ENCODE measurements at regions of chr2 and their contacts with region 1.

Region 1: DNA sequence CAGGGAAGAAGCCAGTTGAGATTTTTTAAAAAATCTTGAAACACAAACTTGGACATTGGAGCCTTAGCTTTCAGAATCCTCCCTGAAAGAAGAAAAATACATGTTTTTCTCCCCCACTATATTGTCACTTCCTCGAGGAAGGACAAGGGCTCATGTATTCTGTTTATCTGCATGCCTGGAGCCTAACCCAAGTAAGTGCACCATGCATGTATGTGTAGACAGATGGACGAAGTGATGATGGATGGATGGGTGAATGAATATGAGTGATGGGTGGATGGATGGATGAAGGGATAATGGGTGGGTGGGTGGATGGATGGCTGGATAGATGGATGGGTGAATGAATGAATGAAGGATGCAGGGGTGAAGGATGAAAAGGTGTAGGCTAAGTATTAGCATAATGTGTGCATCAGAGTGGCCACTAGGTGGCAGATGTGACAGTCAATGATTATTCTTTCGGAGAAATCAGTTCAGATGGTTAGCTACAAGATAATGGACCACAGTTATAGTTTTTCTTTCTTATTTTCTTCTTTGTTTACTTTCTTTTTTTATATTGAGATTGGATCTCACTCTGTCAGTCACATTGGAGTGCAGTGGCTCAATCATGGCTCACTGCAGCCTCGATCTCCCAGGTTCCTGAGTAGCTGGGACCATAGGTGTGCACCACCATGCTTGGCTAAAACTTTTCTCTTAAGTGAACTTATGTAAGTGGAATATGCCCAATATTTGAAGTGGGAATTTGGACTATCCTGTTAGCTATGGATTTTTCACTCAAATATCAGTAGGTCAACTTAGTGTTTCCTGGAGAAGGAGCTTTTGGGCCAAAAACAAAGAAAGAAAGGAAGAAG is 18.5 kb upstream of the CCDC93 start:
- DNase-seq: peak in 5 of 9 donors; percentile 22 to 36 (median 30)
- ATAC-seq: peak; percentile 86
- H3K4me3 ChIP-seq: no peak overlapping the region
- H3K4me3 Mint-ChIP-seq: no peak overlapping the region
- H3K27ac ChIP-seq: no peak overlapping the region
- H3K27ac Mint-ChIP-seq: no peak overlapping the region
- H3K4me1 ChIP-seq: no peaks in the 10 kb centered on the region
- H3K4me1 Mint-ChIP-seq: no peaks in the 10 kb centered on the region
- H3K27me3 ChIP-seq: no peaks in the 10 kb centered on the region
- H3K27me3 Mint-ChIP-seq: peaks cover 48 to 60% (median 51%) of the 10 kb centered on the region in 5 donors

Region 2: GRCh38 chr2:117875786-117876185 is 156.6 kb before region 1 on chr2:
- CTCF ChIA-PET with region 1: no interaction called
- POLR2A ChIA-PET with region 1: no interaction called
- intact Hi-C with region 1: no loop called
- DNase-seq: no peak
- ATAC-seq: no peak
- H3K4me3 ChIP-seq: no peak overlapping the region
- H3K4me3 Mint-ChIP-seq: no peak overlapping the region
- H3K27ac ChIP-seq: no peak overlapping the region
- H3K27ac Mint-ChIP-seq: no peak overlapping the region
- H3K4me1 ChIP-seq: no peaks in the 10 kb centered on the region
- H3K4me1 Mint-ChIP-seq: no peaks in the 10 kb centered on the region
- H3K27me3 ChIP-seq: no peaks in the 10 kb centered on the region
- H3K27me3 Mint-ChIP-seq: peaks cover 0 to 63% (median 47%) of the 10 kb centered on the region in 5 donors

Region 3: GRCh38 chr2:118061135-118061955 is 29.0 kb after region 1 on chr2:
- CTCF ChIA-PET with region 1: interaction called, 4 read pairs
- POLR2A ChIA-PET with region 1: no interaction called
- intact Hi-C with region 1: loop called in 1 of 2 experiments (anchors 1 kb)
- DNase-seq: no peak
- ATAC-seq: peak; percentile 72
- H3K4me3 ChIP-seq: no peak overlapping the region
- H3K4me3 Mint-ChIP-seq: no peak overlapping the region
- H3K27ac ChIP-seq: no peak overlapping the region
- H3K27ac Mint-ChIP-seq: no peak overlapping the region
- H3K4me1 ChIP-seq: no peaks in the 10 kb centered on the region
- H3K4me1 Mint-ChIP-seq: peaks cover 0 to 13% (median 4%) of the 10 kb centered on the region in 7 donors
- H3K27me3 ChIP-seq: no peaks in the 10 kb centered on the region
- H3K27me3 Mint-ChIP-seq: peaks cover 22 to 53% (median 27%) of the 10 kb centered on the region in 5 donors

Region 4: GRCh38 chr2:118186110-118186857 is 153.9 kb after region 1 on chr2:
- CTCF ChIA-PET with region 1: no interaction called
- POLR2A ChIA-PET with region 1: no interaction called
- intact Hi-C with region 1: loop called (anchors 5 kb)
- DNase-seq: peak; percentile 77 to 91 (median 86)
- ATAC-seq: peak; percentile 97
- H3K4me3 ChIP-seq: peak overlapping the region; percentile 81
- H3K4me3 Mint-ChIP-seq: peak overlapping the region; percentile 89 to 98 (median 94)
- H3K27ac ChIP-seq: peak overlapping the region; percentile 74
- H3K27ac Mint-ChIP-seq: peak overlapping the region; percentile 88 to 98 (median 90)
- H3K4me1 ChIP-seq: peaks cover 6 to 9% of the 10 kb centered on the region in 2 donors
- H3K4me1 Mint-ChIP-seq: peaks cover 7 to 25% (median 21%) of the 10 kb centered on the region in 7 donors
- H3K27me3 ChIP-seq: no peaks in the 10 kb centered on the region
- H3K27me3 Mint-ChIP-seq: peaks cover 0 to 2% (median 0%) of the 10 kb centered on the region in 5 donors

Region 5: DNA sequence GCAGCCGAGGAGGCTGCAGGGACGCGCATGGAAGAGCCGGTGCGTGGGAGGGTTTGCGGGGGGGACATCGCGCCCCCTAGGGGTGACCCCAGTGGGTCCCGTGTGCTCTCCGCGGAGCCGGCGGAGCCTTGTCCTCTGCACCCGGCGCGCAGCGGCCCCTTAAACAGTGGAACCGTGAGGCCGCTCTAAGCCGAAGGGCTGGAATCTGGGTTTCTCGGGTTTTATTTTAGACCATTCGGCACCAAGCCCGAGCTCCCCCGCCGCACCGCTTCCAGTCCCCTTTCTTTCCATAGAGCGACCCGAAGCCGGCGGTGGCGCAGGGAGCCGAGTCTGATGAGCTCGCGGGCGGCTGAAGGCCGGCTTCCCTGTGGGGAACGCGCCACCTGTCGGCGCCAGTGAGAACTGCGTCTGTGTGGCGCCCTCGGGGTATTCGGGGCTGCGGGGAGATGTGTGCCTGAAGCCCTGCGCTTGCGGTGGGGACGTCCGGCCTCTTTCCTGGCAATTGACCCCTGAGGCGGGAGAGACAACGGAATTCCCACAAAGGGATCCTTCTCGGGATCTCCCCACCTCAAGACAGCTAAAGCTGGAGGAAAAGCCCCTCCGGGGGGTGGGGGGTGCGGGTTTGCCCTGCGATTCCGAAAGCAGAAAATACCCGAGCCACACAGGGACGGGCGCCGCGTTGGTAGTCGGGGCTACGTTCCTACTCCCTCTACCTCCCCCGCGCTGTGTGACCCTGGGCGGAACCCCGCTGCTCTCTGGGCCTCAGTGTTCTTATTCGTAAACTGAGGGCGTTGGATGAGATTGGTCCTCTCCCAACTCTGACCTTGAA is 823.3 kb after region 1 on chr2:
- CTCF ChIA-PET with region 1: no interaction called
- POLR2A ChIA-PET with region 1: no interaction called
- intact Hi-C with region 1: loop called (anchors 1 to 5 kb)
- DNase-seq: peak; percentile 61 to 90 (median 84)
- ATAC-seq: peak; percentile 93
- H3K4me3 ChIP-seq: peak overlapping the region; percentile 62
- H3K4me3 Mint-ChIP-seq: peak overlapping the region; percentile 37 to 81 (median 74)
- H3K27ac ChIP-seq: no peak overlapping the region
- H3K27ac Mint-ChIP-seq: peak overlapping the region in 2 of 9 donors; percentile 33 to 81
- H3K4me1 ChIP-seq: peaks cover 0 to 17% of the 10 kb centered on the region in 2 donors
- H3K4me1 Mint-ChIP-seq: peaks cover 19 to 38% (median 24%) of the 10 kb centered on the region in 7 donors
- H3K27me3 ChIP-seq: peaks cover 2 to 41% of the 10 kb centered on the region in 2 donors
- H3K27me3 Mint-ChIP-seq: peaks cover 70 to 93% (median 81%) of the 10 kb centered on the region in 5 donors

Region 6: DNA sequence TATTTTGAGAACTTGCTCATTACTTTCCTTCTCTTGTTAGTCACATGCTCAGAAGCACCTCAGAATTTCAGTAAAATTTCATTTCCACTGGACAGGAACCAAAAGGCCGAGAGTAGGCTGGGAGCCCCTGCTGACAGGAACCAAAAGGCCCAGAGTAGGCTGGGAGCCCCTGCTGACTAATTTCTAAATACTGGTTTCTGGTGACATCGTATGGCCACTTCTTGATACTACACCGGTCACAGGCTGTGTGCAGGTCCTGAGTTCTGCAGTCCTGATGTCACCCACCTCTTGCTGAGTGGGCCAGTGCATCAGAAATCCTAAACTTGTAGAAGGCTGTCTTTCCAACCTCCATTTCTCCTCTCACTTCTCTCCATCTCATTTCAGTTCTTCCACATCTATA is 832.7 kb after region 1 on chr2:
- CTCF ChIA-PET with region 1: interaction called, 3 read pairs
- POLR2A ChIA-PET with region 1: no interaction called
- intact Hi-C with region 1: loop called in 1 of 2 experiments (anchors 1 kb)
- DNase-seq: peak in 1 of 9 donors; percentile 32
- ATAC-seq: peak; percentile 76
- H3K4me3 ChIP-seq: no peak overlapping the region
- H3K4me3 Mint-ChIP-seq: no peak overlapping the region
- H3K27ac ChIP-seq: no peak overlapping the region
- H3K27ac Mint-ChIP-seq: no peak overlapping the region
- H3K4me1 ChIP-seq: no peaks in the 10 kb centered on the region
- H3K4me1 Mint-ChIP-seq: peaks cover 0 to 2% (median 0%) of the 10 kb centered on the region in 7 donors
- H3K27me3 ChIP-seq: no peaks in the 10 kb centered on the region
- H3K27me3 Mint-ChIP-seq: peaks cover 32 to 54% (median 48%) of the 10 kb centered on the region in 5 donors

Measured in naive thymus-derived CD4-positive, alpha-beta T cell (primary cell).